OCI-LY7 (cell line): ENCODE measurements at regions of chr5 and their contacts with region 1.

Region 1: GRCh38 chr5:65481635-65482295 is at the start of gene ADAMTS6:
- DNase-seq: peak; percentile 90
- H3K4me3 ChIP-seq: peak within 1 kb of the TSS; percentile 71
- H3K27ac ChIP-seq: peak within 1 kb of the TSS; percentile 72
- H3K4me1 ChIP-seq: peaks cover 36% of the 10 kb centered on the region
- CTCF ChIP-seq: no peak
- total RNA-seq, gene ADAMTS6: 18.1 and 23.0 TPM in 2 replicates

Region 2: GRCh38 chr5:64768358-64769312 is 713.1 kb before region 1 on chr5 and contains the starts of genes CWC27 and SREK1IP1:
- CTCF ChIA-PET with region 1: no interaction called
- POLR2A ChIA-PET with region 1: interaction called, 4 read pairs
- intact Hi-C with region 1: loop called (anchors 1 kb)
- DNase-seq: peak; percentile 96
- H3K4me3 ChIP-seq: peak within 1 kb of the TSS; percentile 97
- H3K27ac ChIP-seq: peak within 1 kb of the TSS; percentile 66
- H3K4me1 ChIP-seq: peaks cover 37% of the 10 kb centered on the region
- CTCF ChIP-seq: no peak
- total RNA-seq, gene CWC27: 15.4 and 18.8 TPM in 2 replicates
- total RNA-seq, gene SREK1IP1: 4.8 and 9.6 TPM in 2 replicates

Region 3: GRCh38 chr5:64958757-64959391 is 522.9 kb before region 1 on chr5:
- CTCF ChIA-PET with region 1: interaction called, 7 read pairs
- POLR2A ChIA-PET with region 1: interaction called, 4 read pairs
- intact Hi-C with region 1: loop called (anchors 2 kb)
- DNase-seq: peak; percentile 78
- H3K4me3 ChIP-seq: no peak overlapping the region
- H3K27ac ChIP-seq: no peak overlapping the region
- H3K4me1 ChIP-seq: no peaks in the 10 kb centered on the region
- CTCF ChIP-seq: peak; percentile 97

Region 4: DNA sequence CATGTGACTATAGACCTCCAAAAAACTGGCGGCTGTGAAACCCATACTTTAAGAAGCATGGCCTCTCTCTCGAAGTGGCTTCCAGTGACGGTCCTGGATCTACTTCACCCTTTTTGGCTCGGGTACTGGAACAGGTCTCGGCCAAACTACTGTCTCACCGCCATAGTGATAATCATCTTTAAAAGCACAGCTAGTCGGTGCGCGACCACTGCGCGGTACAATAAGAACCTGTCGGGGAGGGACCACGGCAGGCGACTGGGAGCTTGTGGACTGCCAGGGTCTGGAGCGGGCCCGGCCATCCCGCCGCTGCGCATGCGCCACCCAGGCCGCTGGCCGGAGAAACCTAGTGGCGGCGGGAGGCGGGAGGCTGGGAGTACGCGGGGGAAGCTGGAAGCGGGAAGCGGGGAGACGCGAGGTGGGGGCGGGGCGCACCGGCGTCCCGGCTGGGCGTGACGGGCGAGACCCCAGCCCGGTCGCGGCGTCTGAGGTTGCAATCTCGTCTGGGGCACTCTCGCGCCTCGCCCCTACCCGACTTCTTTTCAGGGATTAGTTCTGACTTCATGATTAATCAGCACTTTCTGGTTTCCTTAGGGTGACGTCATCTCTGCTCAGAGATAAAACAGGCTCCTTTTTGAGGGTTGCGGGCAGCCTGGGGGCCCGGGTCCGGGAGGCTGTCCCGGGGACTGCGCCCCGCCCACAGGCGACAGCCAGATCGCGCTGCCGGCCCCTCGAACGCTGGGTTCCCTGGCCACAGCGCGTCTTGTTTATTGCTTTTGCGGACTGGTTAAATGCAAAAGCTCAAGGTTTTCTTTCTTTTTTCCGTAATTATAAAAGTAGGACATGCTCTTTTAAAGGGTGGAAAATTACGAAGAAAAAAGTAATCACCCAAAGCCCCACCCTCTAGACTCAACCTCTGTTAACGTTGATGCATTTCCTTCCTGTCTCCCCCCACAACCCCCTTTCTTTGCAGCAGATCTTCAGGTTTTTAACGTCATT is 446.3 kb before region 1 on chr5:
- CTCF ChIA-PET with region 1: no interaction called
- POLR2A ChIA-PET with region 1: interaction called, 4 read pairs
- intact Hi-C with region 1: loop called (anchors 5 kb)
- DNase-seq: peak; percentile 76
- H3K4me3 ChIP-seq: peak overlapping the region; percentile 66
- H3K27ac ChIP-seq: peak overlapping the region; percentile 80
- H3K4me1 ChIP-seq: peaks cover 63% of the 10 kb centered on the region
- CTCF ChIP-seq: peak; percentile 29; the same call in 1 of the 2 replicates

Region 5: GRCh38 chr5:65076251-65076869 is 405.4 kb before region 1 on chr5:
- CTCF ChIA-PET with region 1: no interaction called
- POLR2A ChIA-PET with region 1: interaction called, 12 read pairs
- intact Hi-C with region 1: loop called (anchors 2 kb)
- DNase-seq: peak; percentile 94
- H3K4me3 ChIP-seq: peak overlapping the region; percentile 10
- H3K27ac ChIP-seq: peak overlapping the region; percentile 64
- H3K4me1 ChIP-seq: peaks cover 71% of the 10 kb centered on the region
- CTCF ChIP-seq: peak; percentile 84

Region 6: DNA sequence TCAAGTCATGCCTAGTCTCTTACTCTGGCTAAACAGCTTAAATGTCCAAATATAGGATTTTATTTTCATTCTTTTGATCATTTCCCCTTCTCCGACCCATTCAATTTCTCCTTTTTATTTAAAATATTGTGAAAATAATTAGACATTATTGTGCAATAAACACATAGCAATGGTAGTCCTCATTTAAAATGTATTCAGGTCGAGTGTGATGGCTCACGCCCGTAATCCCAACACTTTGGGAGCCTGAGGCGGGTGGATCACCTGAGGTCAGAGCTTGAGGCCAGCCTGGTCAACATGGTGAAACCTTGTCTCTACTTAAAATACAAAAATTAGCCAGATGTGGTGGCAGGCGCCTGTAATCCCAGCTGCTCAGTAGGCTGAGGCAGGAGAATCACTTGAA is 26.7 kb before region 1 on chr5:
- CTCF ChIA-PET with region 1: no interaction called
- POLR2A ChIA-PET with region 1: no interaction called
- intact Hi-C with region 1: no loop called
- DNase-seq: no peak
- H3K4me3 ChIP-seq: no peak overlapping the region
- H3K27ac ChIP-seq: no peak overlapping the region
- H3K4me1 ChIP-seq: no peaks in the 10 kb centered on the region
- CTCF ChIP-seq: no peak